Naive thymus-derived CD4-positive, alpha-beta T cell (primary cell): ENCODE measurements at regions of chr12 and their contacts with region 1.

Region 1: DNA sequence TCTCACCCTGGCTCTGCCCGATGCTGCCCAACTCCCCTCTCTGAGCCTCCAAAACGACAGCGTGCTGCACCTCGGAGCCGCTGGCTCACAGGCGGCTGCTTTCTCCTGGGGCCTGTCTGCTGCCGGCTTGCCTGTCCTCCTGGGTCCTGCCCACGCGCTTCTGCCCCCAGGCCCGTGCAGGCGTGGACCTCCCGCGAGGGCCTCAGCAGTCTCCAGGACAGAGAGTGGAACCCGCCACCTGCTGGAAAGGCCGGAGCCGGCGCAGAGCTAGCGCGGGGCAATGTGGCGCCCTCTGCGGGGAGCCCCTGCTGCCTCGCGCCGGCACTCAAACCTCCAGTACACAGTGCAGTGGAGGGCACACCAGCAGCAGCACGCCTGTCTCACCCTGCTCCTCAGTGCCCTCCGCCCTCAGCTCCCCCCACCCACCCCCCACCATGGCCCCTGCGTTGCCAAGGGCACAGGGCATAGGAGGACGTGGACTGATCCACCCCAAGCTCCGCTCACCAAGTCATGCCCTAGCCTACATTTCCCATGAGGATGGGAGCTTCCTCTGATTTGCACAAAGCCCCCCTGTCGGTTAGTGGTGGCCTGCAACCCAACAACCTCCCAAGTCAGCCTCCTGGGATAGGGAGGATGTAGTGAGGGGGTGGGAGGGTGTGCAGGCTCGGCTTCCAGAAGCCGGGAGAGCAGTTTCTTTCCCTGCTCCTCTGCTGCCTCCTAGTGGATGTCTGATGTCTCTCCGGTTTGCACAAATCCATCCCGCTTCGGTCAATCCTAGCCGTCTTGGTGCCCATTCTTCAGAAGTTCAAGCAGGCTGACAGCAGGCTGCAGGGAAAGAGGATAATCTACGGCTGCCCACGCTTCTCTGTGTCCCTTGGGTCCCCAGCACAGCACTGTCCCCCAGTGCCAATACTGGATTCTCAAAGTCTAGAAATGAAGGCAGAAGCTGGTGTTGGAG is 25.2 kb downstream of the KRT8 start:
- DNase-seq: peak; percentile 67 to 84 (median 79)
- ATAC-seq: peak; percentile 99
- H3K4me3 ChIP-seq: peak overlapping the region; percentile 48
- H3K4me3 Mint-ChIP-seq: peak overlapping the region; percentile 51 to 85 (median 76)
- H3K27ac ChIP-seq: no peak overlapping the region
- H3K27ac Mint-ChIP-seq: peak overlapping the region in 6 of 9 donors; percentile 5 to 54 (median 32)
- H3K4me1 ChIP-seq: peaks cover 5 to 6% of the 10 kb centered on the region in 2 donors
- H3K4me1 Mint-ChIP-seq: peaks cover 3 to 13% (median 11%) of the 10 kb centered on the region in 7 donors
- H3K27me3 ChIP-seq: peaks cover 0 to 3% of the 10 kb centered on the region in 2 donors
- H3K27me3 Mint-ChIP-seq: peaks cover 0 to 21% (median 8%) of the 10 kb centered on the region in 5 donors

Region 2: GRCh38 chr12:52156736-52157565 is 722.7 kb before region 1 on chr12:
- CTCF ChIA-PET with region 1: interaction called, 8 read pairs
- POLR2A ChIA-PET with region 1: no interaction called
- intact Hi-C with region 1: loop called (anchors 1 to 2 kb)
- DNase-seq: peak; percentile 46 to 80 (median 64)
- ATAC-seq: peak; percentile 56
- H3K4me3 ChIP-seq: no peak overlapping the region
- H3K4me3 Mint-ChIP-seq: no peak overlapping the region
- H3K27ac ChIP-seq: no peak overlapping the region
- H3K27ac Mint-ChIP-seq: peak overlapping the region in 8 of 9 donors; percentile 41 to 97 (median 85)
- H3K4me1 ChIP-seq: peaks cover 25 to 27% of the 10 kb centered on the region in 2 donors
- H3K4me1 Mint-ChIP-seq: peaks cover 22 to 36% (median 34%) of the 10 kb centered on the region in 7 donors
- H3K27me3 ChIP-seq: no peaks in the 10 kb centered on the region
- H3K27me3 Mint-ChIP-seq: no peaks in the 10 kb centered on the region

Region 3: GRCh38 chr12:52372216-52373154 is 507.2 kb before region 1 on chr12:
- CTCF ChIA-PET with region 1: interaction called, 78 read pairs
- POLR2A ChIA-PET with region 1: no interaction called
- intact Hi-C with region 1: loop called (anchors 1 kb)
- DNase-seq: peak in 7 of 9 donors; percentile 30 to 60 (median 42)
- ATAC-seq: peak; percentile 70
- H3K4me3 ChIP-seq: no peak overlapping the region
- H3K4me3 Mint-ChIP-seq: no peak overlapping the region
- H3K27ac ChIP-seq: no peak overlapping the region
- H3K27ac Mint-ChIP-seq: no peak overlapping the region
- H3K4me1 ChIP-seq: no peaks in the 10 kb centered on the region
- H3K4me1 Mint-ChIP-seq: no peaks in the 10 kb centered on the region
- H3K27me3 ChIP-seq: no peaks in the 10 kb centered on the region
- H3K27me3 Mint-ChIP-seq: peaks cover 2 to 31% (median 10%) of the 10 kb centered on the region in 5 donors

Region 4: DNA sequence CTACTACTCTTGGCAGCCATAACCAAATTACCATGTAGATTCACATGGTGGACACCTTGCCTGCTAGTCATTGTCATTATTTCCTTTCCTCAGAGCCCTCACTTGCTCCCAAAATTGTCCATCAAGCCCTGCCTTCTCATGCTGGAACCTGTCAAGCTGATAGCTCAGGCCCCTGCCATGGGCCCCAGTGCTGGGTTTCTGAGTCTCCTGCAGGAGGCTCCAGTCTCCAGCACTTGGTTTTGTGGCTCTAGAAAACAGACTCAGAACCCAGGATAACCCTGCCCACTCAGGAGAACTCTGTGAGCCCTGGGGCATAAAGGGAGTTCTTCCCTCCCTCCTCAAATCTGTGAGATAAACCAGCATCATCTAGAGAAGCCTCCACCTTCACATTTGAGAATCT is 337.5 kb before region 1 on chr12:
- CTCF ChIA-PET with region 1: interaction called, 3 read pairs
- POLR2A ChIA-PET with region 1: no interaction called
- intact Hi-C with region 1: loop called in 1 of 2 experiments (anchors 1 kb)
- DNase-seq: no peak
- ATAC-seq: no peak
- H3K4me3 ChIP-seq: no peak overlapping the region
- H3K4me3 Mint-ChIP-seq: no peak overlapping the region
- H3K27ac ChIP-seq: no peak overlapping the region
- H3K27ac Mint-ChIP-seq: no peak overlapping the region
- H3K4me1 ChIP-seq: no peaks in the 10 kb centered on the region
- H3K4me1 Mint-ChIP-seq: peaks cover 0 to 7% (median 0%) of the 10 kb centered on the region in 7 donors
- H3K27me3 ChIP-seq: no peaks in the 10 kb centered on the region
- H3K27me3 Mint-ChIP-seq: peaks cover 0 to 8% (median 0%) of the 10 kb centered on the region in 5 donors

Region 5: DNA sequence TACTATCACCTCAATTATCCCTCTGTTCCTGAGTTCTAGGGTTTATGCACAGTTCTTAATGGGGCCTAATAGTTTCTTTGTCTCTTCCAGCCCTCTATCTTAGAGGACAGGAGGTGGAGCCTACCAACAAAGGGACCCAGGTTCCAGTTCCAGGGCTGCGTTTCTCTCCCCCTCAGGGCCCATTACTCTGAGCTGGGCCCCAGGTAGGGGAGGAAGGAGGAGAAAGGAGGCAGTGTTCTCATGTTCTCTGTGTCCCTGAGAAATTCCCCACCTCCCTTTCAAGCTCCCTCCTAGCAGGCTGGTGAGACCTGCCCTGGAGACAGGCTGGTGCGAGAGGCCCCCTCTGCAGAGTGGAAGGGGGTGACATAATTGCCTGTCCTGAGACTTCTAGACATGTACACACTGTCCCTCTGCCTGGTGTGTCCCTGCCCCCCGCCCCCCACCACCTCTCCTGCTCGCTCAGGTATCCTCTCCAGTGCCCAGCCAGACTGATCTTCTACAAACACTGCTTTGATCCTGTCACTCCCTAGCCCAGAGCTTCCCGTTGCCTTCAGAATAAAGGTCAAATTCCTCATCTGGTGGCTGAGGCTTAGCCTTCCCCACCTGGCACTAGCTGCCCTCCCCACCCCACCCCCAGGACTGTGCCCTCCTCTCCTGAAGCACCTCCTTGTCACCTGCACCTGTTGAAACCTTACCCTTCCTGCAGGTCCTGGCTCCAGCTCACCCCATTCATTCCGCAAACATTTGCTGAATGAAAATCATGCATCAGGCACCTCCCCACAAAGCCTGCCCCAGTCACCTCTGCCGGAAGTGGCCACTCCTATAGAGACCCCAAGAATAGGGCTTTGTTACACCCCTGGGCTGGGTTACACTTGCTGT is 46.3 kb after region 1 on chr12:
- CTCF ChIA-PET with region 1: no interaction called
- POLR2A ChIA-PET with region 1: no interaction called
- intact Hi-C with region 1: no loop called
- DNase-seq: no peak
- ATAC-seq: no peak
- H3K4me3 ChIP-seq: no peak overlapping the region
- H3K4me3 Mint-ChIP-seq: no peak overlapping the region
- H3K27ac ChIP-seq: no peak overlapping the region
- H3K27ac Mint-ChIP-seq: no peak overlapping the region
- H3K4me1 ChIP-seq: no peaks in the 10 kb centered on the region
- H3K4me1 Mint-ChIP-seq: peaks cover 0 to 9% (median 0%) of the 10 kb centered on the region in 7 donors
- H3K27me3 ChIP-seq: no peaks in the 10 kb centered on the region
- H3K27me3 Mint-ChIP-seq: peaks cover 0 to 15% (median 0%) of the 10 kb centered on the region in 5 donors

Region 6: DNA sequence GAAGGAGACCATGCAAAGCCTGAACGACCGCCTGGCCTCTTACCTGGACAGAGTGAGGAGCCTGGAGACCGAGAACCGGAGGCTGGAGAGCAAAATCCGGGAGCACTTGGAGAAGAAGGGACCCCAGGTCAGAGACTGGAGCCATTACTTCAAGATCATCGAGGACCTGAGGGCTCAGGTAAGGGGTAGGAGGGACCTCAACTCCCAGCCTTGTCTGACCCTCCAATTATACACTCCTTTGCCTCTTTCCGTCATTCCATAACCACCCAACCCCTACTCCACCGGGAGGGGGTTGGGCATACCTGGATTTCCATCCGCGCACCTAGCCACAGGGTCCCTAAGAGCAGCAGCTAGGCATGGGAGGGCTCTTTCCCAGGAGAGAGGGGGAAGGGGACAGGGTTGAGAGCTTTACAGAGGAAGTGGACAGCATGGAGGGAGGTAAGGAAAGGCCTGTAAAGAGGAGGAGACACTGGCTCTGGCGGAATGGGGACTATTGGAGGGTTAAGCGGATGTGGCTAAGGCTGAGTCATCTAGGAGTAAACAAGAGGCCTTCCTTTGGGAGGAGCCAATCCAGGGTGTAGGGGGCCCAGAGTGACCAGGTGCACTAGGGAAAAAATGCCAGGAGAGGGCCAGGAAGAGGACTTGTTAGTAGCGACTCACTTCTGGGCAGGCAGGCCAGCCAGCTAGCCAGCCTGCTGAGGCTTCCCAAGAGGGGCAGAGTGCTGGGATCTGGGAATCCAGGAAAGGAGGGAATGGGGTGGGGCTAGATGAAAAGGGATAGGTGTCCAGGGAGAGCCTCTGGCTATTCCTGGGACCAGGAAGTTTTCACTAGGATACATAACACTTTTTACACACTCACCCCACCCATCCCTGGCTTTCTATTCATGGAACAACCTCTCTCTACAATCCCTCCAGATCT is 70.0 kb after region 1 on chr12:
- CTCF ChIA-PET with region 1: interaction called, 18 read pairs
- POLR2A ChIA-PET with region 1: no interaction called
- intact Hi-C with region 1: loop called in 1 of 2 experiments (anchors 2 kb)
- DNase-seq: no peak
- ATAC-seq: no peak
- H3K4me3 ChIP-seq: peak overlapping the region; percentile 56
- H3K4me3 Mint-ChIP-seq: peak overlapping the region; percentile 39 to 90 (median 82)
- H3K27ac ChIP-seq: peak overlapping the region; percentile 67
- H3K27ac Mint-ChIP-seq: peak overlapping the region in 7 of 9 donors; percentile 69 to 92 (median 76)
- H3K4me1 ChIP-seq: peaks cover 0 to 5% of the 10 kb centered on the region in 2 donors
- H3K4me1 Mint-ChIP-seq: peaks cover 2 to 18% (median 6%) of the 10 kb centered on the region in 7 donors
- H3K27me3 ChIP-seq: no peaks in the 10 kb centered on the region
- H3K27me3 Mint-ChIP-seq: peaks cover 0 to 13% (median 0%) of the 10 kb centered on the region in 5 donors